GM13977 (cell line): ENCODE measurements at regions of chr18 and their contacts with region 1.

Region 1: GRCh38 chr18:5890331-5891183 is 4.8 kb downstream of the TMEM200C start:
- DNase-seq: peak; percentile 88
- CTCF ChIP-seq: peak; percentile 87

Region 2: DNA sequence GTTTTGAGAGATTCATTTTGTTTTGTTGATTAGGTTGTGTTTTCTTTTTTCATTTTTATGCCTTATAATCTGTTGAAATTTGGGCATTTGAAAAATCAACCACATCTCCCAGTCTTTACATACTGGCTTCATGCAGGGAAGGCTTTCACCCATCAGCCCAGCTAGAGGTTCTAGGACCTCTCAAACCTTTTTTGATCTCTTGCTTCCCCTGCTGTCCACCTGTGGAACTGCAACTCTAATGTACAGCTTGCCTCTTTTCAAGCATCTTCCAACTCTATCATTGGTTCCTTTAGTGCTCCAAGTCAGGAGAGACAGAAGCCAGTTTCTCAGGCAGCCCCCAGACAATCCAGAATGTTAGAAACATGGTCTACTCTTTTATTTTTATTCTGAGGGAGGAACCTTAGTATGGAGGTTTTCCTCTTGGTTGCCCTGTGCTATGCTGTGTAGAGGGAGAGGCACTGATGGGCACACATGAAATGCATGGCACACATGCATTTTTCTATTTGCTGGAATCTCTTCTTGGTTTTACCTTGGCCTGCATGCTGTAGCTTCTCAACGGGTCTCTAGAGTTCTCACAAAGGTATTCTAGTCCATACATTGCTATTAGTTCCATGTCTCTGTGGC is 631.4 kb after region 1 on chr18:
- in situ Hi-C with region 1: loop called (anchors 25 kb)
- DNase-seq: peak; percentile 56
- CTCF ChIP-seq: peak; percentile 93